BJ (cell line): ENCODE measurements at regions of chr15 and their contacts with region 1.

Region 1: DNA sequence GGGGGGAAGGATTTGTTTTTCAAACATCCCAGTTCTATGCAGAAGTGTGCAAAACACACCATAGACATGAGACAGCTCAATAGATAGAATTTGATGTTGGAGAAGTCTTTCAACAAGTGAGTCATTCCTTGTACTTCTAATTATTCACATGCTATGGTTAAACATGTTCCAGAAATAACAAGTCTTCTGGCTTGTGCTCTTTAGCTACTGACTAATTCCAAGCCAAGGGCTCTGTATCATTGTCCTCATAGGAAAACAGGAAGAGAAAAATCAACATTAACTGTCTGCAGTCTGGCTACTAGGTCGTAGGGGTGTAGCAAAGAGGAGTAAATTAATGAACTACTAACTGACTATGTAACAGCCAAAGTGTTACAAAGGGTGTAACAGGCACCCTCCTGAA is 25.8 kb downstream of the LDHAL6B start:
- DNase-seq: peak; percentile 72
- H3K4me3 ChIP-seq: no peak overlapping the region
- H3K27me3 ChIP-seq: no peaks in the 10 kb centered on the region
- CTCF ChIP-seq: no peak

Region 2: DNA sequence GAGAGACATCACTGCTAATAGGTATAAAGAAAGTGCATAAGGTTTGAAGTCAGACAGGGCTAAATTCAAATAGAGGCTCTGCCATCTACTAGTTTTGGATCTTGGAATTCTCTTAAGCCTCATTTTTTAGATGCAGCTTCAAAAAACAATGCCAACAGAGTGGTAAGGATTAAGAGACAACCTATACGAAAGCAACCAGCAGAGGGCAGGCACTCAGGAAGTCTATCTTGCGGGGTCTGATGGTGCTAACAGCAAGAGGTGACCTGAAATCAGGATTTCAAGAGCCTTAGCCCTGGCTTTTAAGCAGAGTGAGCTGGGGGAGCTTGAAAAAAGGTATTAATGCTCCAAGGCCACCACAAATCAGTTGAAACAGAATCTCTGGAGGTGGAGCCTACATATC is 14.9 kb after region 1 on chr15:
- CTCF ChIA-PET with region 1: interaction called, 17 read pairs
- POLR2A ChIA-PET with region 1: no interaction called
- DNase-seq: no peak
- H3K4me3 ChIP-seq: no peak overlapping the region
- H3K27me3 ChIP-seq: no peaks in the 10 kb centered on the region
- CTCF ChIP-seq: peak; percentile 72